Activated T-helper 1 cell treated with anti-CD3 and anti-CD28 coated beads, Interleukin-12 subunit alpha, Interleukin-12 subunit beta, Interleukin-2, Interleukin-4 antibody, amounts not matched to agents 30 ng/mL and 10 ng/mL and 1 ng/mL, durations not matched to agents 14 hours and 24 hours and 36 hours (primary cell): ENCODE measurements at regions of chr4 and their contacts with region 1.

Region 1: DNA sequence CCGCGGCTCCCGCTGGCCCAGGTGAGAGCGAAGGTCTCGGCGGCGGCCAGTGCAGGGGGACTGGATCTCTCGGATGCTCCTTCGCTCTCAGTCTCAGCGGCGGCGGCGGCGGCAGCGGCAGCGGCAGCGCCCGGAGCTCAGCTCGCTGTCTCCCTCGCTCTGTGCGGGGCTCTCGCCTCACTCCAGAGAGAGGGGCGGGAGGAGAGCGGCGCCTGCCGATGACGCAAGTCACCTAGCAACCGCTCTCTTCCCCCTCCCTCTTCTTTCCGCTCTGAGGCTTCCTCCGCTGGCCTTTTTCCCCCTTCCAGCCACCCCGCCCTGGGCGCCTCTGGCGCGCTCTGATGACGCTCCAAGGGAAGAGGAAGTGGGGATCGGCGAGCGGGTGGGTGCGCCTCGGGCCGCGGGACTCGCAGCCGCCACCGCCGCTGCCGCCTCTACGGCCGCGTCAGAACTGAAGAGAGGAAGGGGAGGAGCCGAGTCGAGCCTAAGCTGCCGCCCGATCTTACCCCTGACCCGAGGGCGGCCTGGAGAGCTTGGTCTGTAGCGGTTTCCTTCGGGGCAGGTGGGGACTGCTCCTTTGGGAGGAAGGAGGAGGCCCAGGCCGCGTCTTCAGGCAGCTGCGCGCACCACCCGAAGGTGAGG is at the start of gene FBXW7:
- DNase-seq: peak; percentile 100
- H3K4me3 Mint-ChIP-seq: peak within 1 kb of the TSS; percentile 99
- H3K27ac Mint-ChIP-seq: peak within 1 kb of the TSS; percentile 100
- H3K4me1 Mint-ChIP-seq: peaks cover 63% of the 10 kb centered on the region
- H3K27me3 Mint-ChIP-seq: no peaks in the 10 kb centered on the region
- total RNA-seq, gene FBXW7: 53.0 and 53.3 TPM in 2 replicates

Region 2: GRCh38 chr4:151099229-151099975 is 1436.6 kb before region 1 on chr4 and contains the start of gene RPS3A:
- intact Hi-C with region 1: loop called (anchors 1 kb)
- DNase-seq: peak; percentile 98
- H3K4me3 Mint-ChIP-seq: peak within 1 kb of the TSS; percentile 97
- H3K27ac Mint-ChIP-seq: peak within 1 kb of the TSS; percentile 98
- H3K4me1 Mint-ChIP-seq: peaks cover 56% of the 10 kb centered on the region
- H3K27me3 Mint-ChIP-seq: peaks cover 3% of the 10 kb centered on the region
- total RNA-seq, gene RPS3A: 1,686 and 1,760 TPM in 2 replicates

Region 3: DNA sequence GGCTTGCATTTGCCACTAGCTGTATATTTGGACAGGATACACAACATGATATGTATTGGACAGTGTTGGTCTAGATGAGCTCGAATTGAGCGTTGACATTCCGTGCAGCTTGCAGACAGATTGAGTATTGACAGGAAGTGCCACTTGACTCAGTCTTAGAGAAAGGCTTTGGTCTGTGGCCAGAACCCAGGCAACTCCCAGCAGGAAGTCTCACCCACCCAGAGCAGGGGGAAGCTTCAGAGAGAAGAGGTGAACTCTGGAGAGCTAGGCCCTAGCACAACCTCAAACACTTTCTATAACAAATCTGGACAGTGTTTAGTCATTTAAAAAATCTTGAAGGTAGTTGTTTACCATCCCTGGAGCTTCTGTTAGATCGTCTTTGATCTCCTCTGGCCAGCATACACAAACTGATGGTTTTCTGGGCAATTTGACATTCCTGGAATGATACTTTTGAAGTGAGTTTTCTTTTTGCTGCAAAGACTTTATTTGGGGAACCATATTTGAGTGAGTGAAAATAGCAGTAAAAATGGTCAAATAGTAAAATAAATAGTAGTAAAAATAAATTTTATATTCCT is 280.5 kb before region 1 on chr4:
- intact Hi-C with region 1: loop called (anchors 10 kb)
- DNase-seq: peak; percentile 70
- H3K4me3 Mint-ChIP-seq: no peak overlapping the region
- H3K27ac Mint-ChIP-seq: no peak overlapping the region
- H3K4me1 Mint-ChIP-seq: no peaks in the 10 kb centered on the region
- H3K27me3 Mint-ChIP-seq: no peaks in the 10 kb centered on the region

Region 4: GRCh38 chr4:152415980-152416379 is 120.0 kb before region 1 on chr4:
- intact Hi-C with region 1: no loop called
- DNase-seq: no peak
- H3K4me3 Mint-ChIP-seq: no peak overlapping the region
- H3K27ac Mint-ChIP-seq: no peak overlapping the region
- H3K4me1 Mint-ChIP-seq: peaks cover 18% of the 10 kb centered on the region
- H3K27me3 Mint-ChIP-seq: no peaks in the 10 kb centered on the region

Region 5: GRCh38 chr4:152500800-152501434 is 35.1 kb before region 1 on chr4:
- intact Hi-C with region 1: loop called (anchors 1 kb)
- DNase-seq: peak; percentile 56
- H3K4me3 Mint-ChIP-seq: no peak overlapping the region
- H3K27ac Mint-ChIP-seq: no peak overlapping the region
- H3K4me1 Mint-ChIP-seq: peaks cover 27% of the 10 kb centered on the region
- H3K27me3 Mint-ChIP-seq: no peaks in the 10 kb centered on the region

Region 6: GRCh38 chr4:152640058-152640833 is 104.2 kb after region 1 on chr4:
- intact Hi-C with region 1: loop called (anchors 1 kb)
- DNase-seq: no peak
- H3K4me3 Mint-ChIP-seq: no peak overlapping the region
- H3K27ac Mint-ChIP-seq: no peak overlapping the region
- H3K4me1 Mint-ChIP-seq: peaks cover 42% of the 10 kb centered on the region
- H3K27me3 Mint-ChIP-seq: no peaks in the 10 kb centered on the region

Region 7: DNA sequence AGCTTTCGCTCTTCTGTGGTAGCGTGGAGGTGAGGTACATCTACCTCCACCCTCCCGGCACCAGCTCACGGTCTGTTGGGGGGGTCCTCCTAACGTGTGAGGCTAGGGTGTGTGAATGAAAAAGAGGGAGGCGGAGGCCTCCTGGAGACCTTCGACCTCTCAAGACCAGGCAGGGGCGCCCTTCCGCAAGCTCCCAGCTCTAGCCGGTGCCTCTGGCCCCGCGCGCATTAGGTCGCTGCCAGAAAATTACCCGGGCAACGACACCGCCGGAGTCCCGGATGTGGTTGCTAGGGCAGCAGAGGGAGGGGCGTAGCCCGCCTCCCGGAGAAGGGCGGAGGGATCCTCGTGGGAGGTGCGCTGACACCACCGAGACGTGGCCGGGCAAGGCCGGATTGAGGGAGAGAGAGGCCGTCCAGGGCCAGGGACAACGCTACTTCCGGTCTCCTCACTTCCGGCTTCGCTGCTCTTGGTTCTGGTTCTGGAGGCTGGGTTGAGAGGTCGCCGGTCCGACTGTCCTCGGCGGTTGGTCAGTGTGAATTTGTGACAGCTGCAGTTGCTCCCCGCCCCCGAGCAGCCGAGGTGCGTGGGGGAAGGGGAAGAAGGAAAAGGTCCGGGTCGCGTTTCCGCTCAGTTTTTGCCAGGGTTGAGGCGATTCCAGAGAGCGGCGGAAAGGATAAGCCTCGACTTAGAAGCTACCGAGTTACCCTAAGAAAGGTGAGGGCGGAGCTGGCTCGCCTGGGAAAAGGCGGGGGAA is 243.7 kb after region 1 on chr4 and contains the starts of genes ARFIP1 and TIGD4:
- intact Hi-C with region 1: loop called (anchors 1 kb)
- DNase-seq: peak; percentile 96
- H3K4me3 Mint-ChIP-seq: peak within 1 kb of the TSS; percentile 99
- H3K27ac Mint-ChIP-seq: peak within 1 kb of the TSS; percentile 94
- H3K4me1 Mint-ChIP-seq: peaks cover 44% of the 10 kb centered on the region
- H3K27me3 Mint-ChIP-seq: peaks cover 25% of the 10 kb centered on the region
- total RNA-seq, gene ARFIP1: 18.6 and 23.2 TPM in 2 replicates
- total RNA-seq, gene TIGD4: 0.24 and 0.57 TPM in 2 replicates

Region 8: DNA sequence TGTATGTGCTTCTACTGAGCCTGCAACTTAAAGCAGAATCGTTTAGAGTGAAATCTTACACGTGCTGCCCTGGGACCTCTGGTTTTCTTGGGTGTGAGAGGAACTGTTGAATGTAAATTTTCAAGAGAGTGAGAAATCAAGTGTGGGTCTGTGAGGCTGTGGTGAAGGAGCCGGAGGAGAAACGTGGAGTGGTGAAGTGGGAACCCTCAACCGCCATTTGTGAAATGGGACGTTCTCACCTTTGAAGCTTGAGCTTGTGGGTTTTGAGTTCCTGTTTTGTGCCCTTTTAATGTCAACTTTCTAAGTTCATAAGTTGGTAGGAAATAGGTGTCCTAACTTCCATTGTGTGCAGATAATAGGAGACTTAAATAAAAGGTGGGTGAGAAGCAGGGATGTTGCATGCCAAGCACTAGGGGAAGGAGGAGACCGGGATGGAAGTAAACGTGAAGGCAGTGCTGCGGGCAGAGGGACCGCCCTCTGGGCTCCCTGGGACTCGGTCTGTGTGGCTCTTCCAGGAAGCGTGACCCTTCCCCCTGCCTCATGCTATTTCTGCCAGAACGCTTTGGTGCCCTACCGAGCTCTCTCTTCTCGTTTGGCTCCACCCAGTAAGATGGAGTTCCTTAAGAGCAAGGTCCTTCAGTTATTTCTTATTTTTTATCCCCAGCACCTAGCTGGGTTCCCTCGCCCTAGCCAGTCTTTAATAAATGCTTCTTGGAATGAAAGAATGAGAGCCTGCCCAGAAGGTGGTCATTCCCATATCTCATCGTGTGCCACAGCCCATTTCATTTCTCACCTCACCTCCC is 986.2 kb after region 1 on chr4:
- intact Hi-C with region 1: loop called (anchors 10 kb)
- DNase-seq: peak; percentile 54
- H3K4me3 Mint-ChIP-seq: peak overlapping the region; percentile 60
- H3K27ac Mint-ChIP-seq: peak overlapping the region; percentile 91
- H3K4me1 Mint-ChIP-seq: peaks cover 89% of the 10 kb centered on the region
- H3K27me3 Mint-ChIP-seq: no peaks in the 10 kb centered on the region

Region 9: DNA sequence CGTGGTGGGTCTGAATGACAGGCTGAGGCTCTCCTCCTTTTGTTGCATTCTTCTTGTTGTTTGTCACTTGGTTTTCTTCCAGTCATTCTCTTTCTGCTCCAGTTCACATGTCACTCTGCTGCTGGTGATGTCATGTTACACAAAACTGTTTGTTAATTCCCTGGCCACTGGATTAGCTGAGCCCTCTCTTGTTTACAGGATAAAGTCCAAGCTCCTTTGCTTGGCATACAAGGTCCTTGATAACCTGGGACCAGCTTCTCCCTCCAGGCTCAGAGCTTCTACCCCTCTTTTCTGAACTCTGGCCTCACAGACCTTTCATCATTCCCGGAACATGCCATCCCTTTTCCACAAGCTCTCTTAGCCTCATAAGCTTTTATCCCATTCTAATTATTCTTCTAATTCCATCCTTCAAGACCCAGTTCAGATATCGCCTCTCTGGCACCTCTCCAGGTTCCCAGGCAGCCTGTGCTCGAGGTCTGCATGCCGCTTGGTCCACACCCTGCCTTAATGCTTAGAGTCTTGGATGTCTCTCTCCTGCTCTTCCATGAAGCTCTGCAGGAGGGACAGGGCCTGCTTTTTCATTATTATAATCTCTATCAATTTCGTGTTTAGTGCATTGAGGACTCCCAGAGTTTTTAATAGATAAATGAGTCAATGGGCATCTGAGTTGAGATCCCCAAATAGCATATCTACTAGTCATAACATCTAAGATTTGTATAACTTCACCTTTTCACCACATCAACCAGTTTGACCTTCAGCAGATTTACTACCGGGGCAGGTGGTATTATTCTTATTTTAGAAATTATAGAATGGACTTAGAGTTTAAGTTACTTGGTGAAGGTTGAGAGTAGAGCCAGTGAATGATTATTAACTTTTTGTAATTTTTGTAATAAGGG is 1028.9 kb after region 1 on chr4:
- intact Hi-C with region 1: no loop called
- DNase-seq: no peak
- H3K4me3 Mint-ChIP-seq: no peak overlapping the region
- H3K27ac Mint-ChIP-seq: no peak overlapping the region
- H3K4me1 Mint-ChIP-seq: peaks cover 38% of the 10 kb centered on the region
- H3K27me3 Mint-ChIP-seq: peaks cover 1% of the 10 kb centered on the region